HEK293 (cell line): ENCODE measurements at regions of chr12 and their contacts with region 1.

Region 1: DNA sequence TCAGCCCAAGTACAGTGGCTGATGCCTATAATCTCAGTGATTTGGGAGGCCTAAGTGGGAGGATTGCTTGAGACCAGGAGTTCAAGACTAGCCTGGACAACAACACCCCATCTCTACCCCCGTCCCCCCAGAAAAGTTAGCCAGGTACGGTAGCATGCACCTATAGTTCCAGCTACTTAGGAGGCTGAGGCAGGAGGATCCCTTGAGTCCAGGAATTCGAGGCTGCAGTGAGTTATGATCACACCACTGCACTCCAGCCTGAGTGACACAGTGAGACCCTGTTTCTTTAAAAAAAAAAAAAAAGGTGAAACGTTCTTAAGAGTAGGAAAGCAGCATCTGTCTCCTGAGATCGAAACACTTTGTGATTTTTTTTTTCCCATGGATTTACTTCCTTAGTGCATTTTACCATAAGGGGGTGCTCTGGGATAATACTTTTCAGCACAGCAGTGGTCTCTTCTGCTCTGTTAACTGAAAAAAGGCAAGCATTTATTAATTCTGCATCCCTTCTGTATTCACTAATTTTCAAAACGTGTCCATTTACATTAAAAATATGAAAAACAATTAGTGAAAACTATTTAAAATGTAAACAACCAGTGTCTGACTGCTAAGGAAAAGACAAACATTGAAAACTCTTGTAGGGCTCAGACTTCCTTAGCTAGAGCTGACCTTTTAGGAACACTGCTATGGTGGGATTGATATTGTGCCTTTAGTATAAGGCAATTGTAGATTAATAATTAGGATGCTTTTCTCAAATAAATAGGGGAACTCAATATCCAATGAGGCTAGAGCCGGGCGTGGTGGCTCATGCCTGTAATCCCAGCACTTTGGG is 31.2 kb upstream of the USP44 start:
- H3K4me3 ChIP-seq: no peak overlapping the region
- H3K27ac ChIP-seq: no peak overlapping the region
- H3K4me1 ChIP-seq: no peaks in the 10 kb centered on the region
- CTCF ChIP-seq: peak; percentile 51; the same call in 1 of the 2 replicates

Region 2: GRCh38 chr12:95593266-95593871 is 10.9 kb after region 1 on chr12:
- CTCF ChIA-PET with region 1: interaction called, 14 read pairs
- POLR2A ChIA-PET with region 1: no interaction called
- H3K4me3 ChIP-seq: no peak overlapping the region
- H3K27ac ChIP-seq: no peak overlapping the region
- H3K4me1 ChIP-seq: no peaks in the 10 kb centered on the region
- CTCF ChIP-seq: no peak

Region 3: GRCh38 chr12:95820102-95820703 is 237.8 kb after region 1 on chr12:
- CTCF ChIA-PET with region 1: interaction called, 37 read pairs
- POLR2A ChIA-PET with region 1: no interaction called
- H3K4me3 ChIP-seq: no peak overlapping the region
- H3K27ac ChIP-seq: no peak overlapping the region
- H3K4me1 ChIP-seq: no peaks in the 10 kb centered on the region
- CTCF ChIP-seq: peak; percentile 20; the same call in 1 of the 2 replicates

Region 4: DNA sequence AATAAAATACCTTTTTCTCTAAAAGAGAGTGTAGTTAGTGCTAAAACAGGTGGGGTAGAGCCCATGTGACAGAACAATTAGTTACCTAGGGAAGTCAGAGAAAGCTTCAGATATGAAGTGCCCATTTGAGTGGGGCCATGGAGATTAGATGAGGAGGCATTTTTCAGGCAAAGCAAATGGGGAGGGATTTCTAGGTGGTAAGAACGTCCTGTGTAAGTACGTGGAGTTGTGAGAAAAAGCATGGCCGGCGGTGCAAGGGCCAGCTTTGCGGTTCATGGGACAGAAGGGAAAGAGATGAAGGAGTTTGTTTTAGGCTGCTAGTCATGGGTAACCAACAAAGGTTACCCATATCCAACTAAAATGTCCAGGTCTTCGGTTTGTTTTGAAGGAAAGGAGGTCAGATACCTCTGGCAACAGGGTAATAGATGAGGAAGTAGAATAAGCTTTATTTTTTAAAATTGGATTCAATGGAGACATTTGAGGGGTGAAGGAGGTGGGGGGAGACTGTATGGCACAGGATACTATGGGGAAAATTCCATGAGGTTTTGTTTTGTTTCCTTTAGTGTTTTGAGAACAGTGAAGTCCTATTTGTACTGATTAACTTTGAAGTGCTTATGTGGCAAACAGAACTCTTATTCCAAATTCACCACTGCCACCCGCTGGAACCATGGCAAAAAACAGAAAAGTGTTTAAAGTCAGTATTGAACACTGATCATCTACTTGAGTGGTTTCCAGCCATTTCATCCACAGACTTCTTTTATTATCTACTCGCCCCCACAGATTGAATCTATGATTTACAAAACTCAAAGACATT is 266.3 kb after region 1 on chr12:
- CTCF ChIA-PET with region 1: interaction called, 29 read pairs
- POLR2A ChIA-PET with region 1: no interaction called
- H3K4me3 ChIP-seq: no peak overlapping the region
- H3K27ac ChIP-seq: no peak overlapping the region
- H3K4me1 ChIP-seq: no peaks in the 10 kb centered on the region
- CTCF ChIP-seq: peak; percentile 60